Activated CD8-positive, alpha-beta T cell treated with anti-CD3 and anti-CD28 coated beads for 36 hours (primary cell): ENCODE measurements at regions of chr3 and their contacts with region 1.

Region 1: GRCh38 chr3:113912552-113913236 is 35.1 kb upstream of the ZDHHC23 start:
- DNase-seq: peak; percentile 58
- ATAC-seq: peak; percentile 97
- H3K4me3 Mint-ChIP-seq: no peak overlapping the region
- H3K27ac Mint-ChIP-seq: no peak overlapping the region
- H3K4me1 Mint-ChIP-seq: peaks cover 2% of the 10 kb centered on the region
- H3K27me3 Mint-ChIP-seq: no peaks in the 10 kb centered on the region
- CTCF ChIP-seq: peak; percentile 70

Region 2: GRCh38 chr3:113838631-113839209 is 74.0 kb before region 1 on chr3 and contains the start of gene GRAMD1C:
- CTCF ChIA-PET with region 1: interaction called, 70 read pairs
- POLR2A ChIA-PET with region 1: interaction called, 4 read pairs
- intact Hi-C with region 1: loop called (anchors 1 kb)
- DNase-seq: peak; percentile 91
- ATAC-seq: peak; percentile 100
- H3K4me3 Mint-ChIP-seq: peak within 1 kb of the TSS; percentile 75
- H3K27ac Mint-ChIP-seq: no peak within 1 kb of the TSS
- H3K4me1 Mint-ChIP-seq: peaks cover 9% of the 10 kb centered on the region
- H3K27me3 Mint-ChIP-seq: no peaks in the 10 kb centered on the region
- CTCF ChIP-seq: peak; percentile 71
- total RNA-seq, gene GRAMD1C: 0.29 to 0.61 TPM